Caco-2 (cell line): ENCODE measurements at regions of chr1 and their contacts with region 1.

Region 1: GRCh38 chr1:160098852-160099561 is 588 bp upstream of the IGSF8 start:
- DNase-seq: peak; percentile 96 to 98
- H3K4me3 ChIP-seq: peak overlapping the region; percentile 38
- H3K4me3 Mint-ChIP-seq: peak overlapping the region; percentile 86
- H3K27ac Mint-ChIP-seq: peak overlapping the region; percentile 11
- H3K4me1 ChIP-seq: peaks cover 30% of the 10 kb centered on the region
- H3K4me1 Mint-ChIP-seq: peaks cover 26% of the 10 kb centered on the region
- H3K27me3 ChIP-seq: no peaks in the 10 kb centered on the region
- H3K27me3 Mint-ChIP-seq: no peaks in the 10 kb centered on the region
- CTCF ChIP-seq: no peak

Region 2: GRCh38 chr1:160085686-160086455 is 13.1 kb before region 1 on chr1:
- CTCF ChIA-PET with region 1: interaction called, 13 read pairs
- POLR2A ChIA-PET with region 1: no interaction called
- intact Hi-C with region 1: loop called (anchors 1 kb)
- DNase-seq: peak; percentile 72 to 82
- H3K4me3 ChIP-seq: no peak overlapping the region
- H3K4me3 Mint-ChIP-seq: no peak overlapping the region
- H3K27ac Mint-ChIP-seq: no peak overlapping the region
- H3K4me1 ChIP-seq: no peaks in the 10 kb centered on the region
- H3K4me1 Mint-ChIP-seq: peaks cover 7% of the 10 kb centered on the region
- H3K27me3 ChIP-seq: no peaks in the 10 kb centered on the region
- H3K27me3 Mint-ChIP-seq: peaks cover 8% of the 10 kb centered on the region
- CTCF ChIP-seq: peak; percentile 82 to 87

Region 3: DNA sequence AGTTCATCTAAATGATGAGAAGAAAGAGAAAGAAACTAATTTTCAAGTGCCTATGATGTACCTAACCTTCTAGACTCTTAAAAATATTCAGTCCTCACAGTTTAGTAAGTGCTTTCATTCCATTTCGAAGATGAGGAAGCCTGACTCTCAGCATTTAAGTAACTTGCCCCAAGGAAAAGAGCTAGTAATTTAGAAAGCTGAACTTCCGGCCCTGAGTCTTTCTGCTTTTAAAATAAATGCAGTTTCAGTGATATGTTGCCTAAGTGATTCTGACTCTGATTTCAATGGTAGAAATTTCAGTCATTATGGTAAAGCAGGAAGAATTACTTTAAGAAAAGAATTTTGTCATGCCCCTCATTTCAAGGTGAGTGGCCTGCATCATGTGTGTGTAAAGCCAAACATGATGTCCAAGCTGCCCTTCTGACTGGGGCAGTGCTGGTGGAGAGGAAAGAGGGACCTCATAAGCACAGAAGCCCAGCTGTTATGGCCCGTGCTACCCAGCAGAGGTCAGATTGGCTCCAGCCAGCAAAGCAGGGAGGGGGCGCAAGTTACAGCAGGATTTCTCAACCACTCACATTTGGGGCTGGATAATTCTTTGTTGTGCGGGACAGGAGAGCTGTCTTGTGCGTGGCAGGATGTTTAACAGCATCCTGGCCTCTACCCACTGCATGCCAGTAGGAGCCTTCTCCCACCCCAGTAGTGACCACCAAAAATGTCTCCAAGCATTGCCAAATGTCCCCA is 63.1 kb after region 1 on chr1:
- CTCF ChIA-PET with region 1: interaction called, 4 read pairs
- POLR2A ChIA-PET with region 1: no interaction called
- intact Hi-C with region 1: loop called (anchors 1 kb)
- DNase-seq: peak in 1 of 2 experiments; percentile 40
- H3K4me3 ChIP-seq: no peak overlapping the region
- H3K4me3 Mint-ChIP-seq: no peak overlapping the region
- H3K27ac Mint-ChIP-seq: no peak overlapping the region
- H3K4me1 ChIP-seq: peaks cover 16% of the 10 kb centered on the region; the same call in 1 of the 2 replicates
- H3K4me1 Mint-ChIP-seq: no peaks in the 10 kb centered on the region
- H3K27me3 ChIP-seq: no peaks in the 10 kb centered on the region
- H3K27me3 Mint-ChIP-seq: peaks cover 2% of the 10 kb centered on the region
- CTCF ChIP-seq: peak; percentile 41 to 61

Region 4: DNA sequence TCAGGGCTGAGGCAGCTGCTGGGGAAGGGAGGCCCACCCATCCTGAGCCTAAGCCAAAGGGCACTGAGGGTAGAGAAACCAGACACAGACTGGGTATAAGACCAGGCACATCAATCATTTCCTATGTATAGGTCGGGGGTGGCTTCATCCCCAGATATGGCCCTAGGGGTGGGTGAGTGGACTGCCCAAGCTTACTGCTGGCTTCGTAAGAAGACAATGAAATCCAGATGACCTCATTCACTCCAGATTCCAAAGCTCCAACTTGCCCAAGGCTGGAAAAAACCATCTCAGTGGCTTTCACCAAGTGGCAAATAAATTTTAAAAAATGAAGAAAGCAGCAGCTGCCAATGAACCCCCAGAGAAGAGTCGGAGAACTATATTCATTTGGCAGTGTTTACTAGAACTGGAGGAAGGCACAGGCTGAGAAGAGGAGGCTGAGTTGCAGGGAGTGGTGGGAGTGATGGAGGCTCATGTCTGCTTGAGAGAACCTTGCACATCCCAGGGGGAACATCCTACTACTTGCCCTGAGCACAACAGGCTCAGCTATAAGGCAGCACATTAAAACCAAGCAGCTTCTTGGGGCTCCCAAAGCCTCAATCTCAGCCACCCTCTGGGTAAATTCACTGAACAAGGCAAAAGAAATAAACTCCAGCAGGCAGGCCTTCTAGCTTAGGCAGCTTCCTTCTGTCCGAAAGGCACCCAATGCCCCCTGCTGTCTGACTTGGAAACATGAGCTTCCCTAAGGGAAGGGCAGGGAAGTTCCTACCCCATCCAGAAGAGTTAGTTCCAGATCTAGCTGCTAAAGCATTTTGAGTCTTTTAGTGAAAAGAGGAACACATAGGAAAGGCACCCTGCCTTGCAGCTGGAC is 120.3 kb after region 1 on chr1:
- CTCF ChIA-PET with region 1: interaction called, 37 read pairs
- POLR2A ChIA-PET with region 1: interaction called, 7 read pairs
- intact Hi-C with region 1: loop called (anchors 1 kb)
- DNase-seq: peak; percentile 62 to 69
- H3K4me3 ChIP-seq: no peak overlapping the region
- H3K4me3 Mint-ChIP-seq: no peak overlapping the region
- H3K27ac Mint-ChIP-seq: no peak overlapping the region
- H3K4me1 ChIP-seq: 0 out of 2 replicates have a peak, but pooled peaks cover 6% of the 10 kb centered on the region
- H3K4me1 Mint-ChIP-seq: peaks cover 9% of the 10 kb centered on the region
- H3K27me3 ChIP-seq: no peaks in the 10 kb centered on the region
- H3K27me3 Mint-ChIP-seq: no peaks in the 10 kb centered on the region
- CTCF ChIP-seq: peak; percentile 62 to 67

Region 5: GRCh38 chr1:160291248-160292220 is 192.5 kb after region 1 on chr1:
- CTCF ChIA-PET with region 1: interaction called, 25 read pairs
- POLR2A ChIA-PET with region 1: no interaction called
- intact Hi-C with region 1: loop called (anchors 1 kb)
- DNase-seq: peak; percentile 71 to 72
- H3K4me3 ChIP-seq: no peak overlapping the region
- H3K4me3 Mint-ChIP-seq: no peak overlapping the region
- H3K27ac Mint-ChIP-seq: no peak overlapping the region
- H3K4me1 ChIP-seq: no peaks in the 10 kb centered on the region
- H3K4me1 Mint-ChIP-seq: peaks cover 4% of the 10 kb centered on the region
- H3K27me3 ChIP-seq: no peaks in the 10 kb centered on the region
- H3K27me3 Mint-ChIP-seq: no peaks in the 10 kb centered on the region
- CTCF ChIP-seq: peak; percentile 66 to 77

Region 6: DNA sequence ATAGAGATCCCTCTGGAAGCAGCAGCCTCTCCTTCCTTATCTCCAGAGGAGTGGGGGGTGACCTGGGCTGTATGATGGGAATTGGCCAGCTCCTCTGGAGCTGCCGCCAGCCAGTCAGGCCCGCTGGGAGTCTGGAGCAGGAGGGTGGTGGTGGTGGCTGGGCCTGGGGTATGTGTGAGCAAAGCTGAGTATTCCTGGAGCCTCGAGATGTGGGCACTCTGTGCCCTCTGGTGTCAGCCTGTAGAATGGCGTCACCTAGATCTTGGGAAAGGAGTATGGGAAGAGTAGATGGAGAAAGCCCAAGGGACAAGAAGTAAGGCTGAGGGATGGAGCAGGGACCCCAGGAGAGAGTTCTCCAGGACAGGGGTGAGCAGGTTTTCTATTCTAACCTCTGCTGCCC is 317.4 kb after region 1 on chr1:
- CTCF ChIA-PET with region 1: no interaction called
- POLR2A ChIA-PET with region 1: no interaction called
- intact Hi-C with region 1: loop called (anchors 2 kb)
- DNase-seq: peak in 1 of 2 experiments; percentile 40
- H3K4me3 ChIP-seq: no peak overlapping the region
- H3K4me3 Mint-ChIP-seq: no peak overlapping the region
- H3K27ac Mint-ChIP-seq: no peak overlapping the region
- H3K4me1 ChIP-seq: no peaks in the 10 kb centered on the region
- H3K4me1 Mint-ChIP-seq: no peaks in the 10 kb centered on the region
- H3K27me3 ChIP-seq: no peaks in the 10 kb centered on the region
- H3K27me3 Mint-ChIP-seq: peaks cover 7% of the 10 kb centered on the region
- CTCF ChIP-seq: peak; percentile 33 to 58